Left cardiac atrium (tissue), 4 donors: ENCODE measurements at regions of chr11 and their contacts with region 1.

Region 1: GRCh38 chr11:73184953-73185671 is 33.0 kb upstream of the P2RY2 start:
- DNase-seq: peak; percentile 78
- ATAC-seq: peak; percentile 47 to 63

Region 2: GRCh38 chr11:73114110-73114824 is 70.8 kb before region 1 on chr11:
- intact Hi-C with region 1: no loop called
- DNase-seq: no peak
- ATAC-seq: no peak

Region 3: DNA sequence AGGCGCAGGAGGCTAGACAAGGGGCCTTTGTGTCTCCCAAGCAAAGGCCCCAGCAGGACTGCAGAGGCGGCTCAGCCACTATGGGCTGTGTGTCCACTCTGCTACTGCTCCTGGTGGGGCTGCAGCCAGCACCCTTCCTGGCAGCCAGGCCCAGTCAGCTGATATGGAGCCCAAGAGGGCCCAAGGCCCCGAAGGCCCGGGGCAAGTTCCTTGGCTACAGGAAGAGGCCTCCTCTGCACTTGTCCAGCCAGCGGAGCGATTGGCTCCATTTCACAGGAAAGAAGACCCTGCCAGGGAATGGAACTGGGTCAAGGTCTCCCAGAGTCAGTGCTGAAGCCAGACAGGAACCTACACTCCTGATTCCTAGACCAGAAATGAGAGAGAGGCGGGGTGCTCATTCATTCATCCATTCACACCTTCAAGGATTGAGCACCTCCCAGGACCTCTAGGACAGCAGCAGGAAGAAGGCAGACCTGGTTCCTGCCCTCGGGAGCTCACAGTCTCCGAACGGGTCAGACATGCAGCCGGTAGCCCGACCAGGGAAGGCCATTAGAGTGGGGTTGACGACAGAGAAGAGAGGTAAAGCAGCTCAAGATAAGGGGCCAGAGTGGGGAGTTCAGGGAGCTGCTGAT is 32.1 kb after region 1 on chr11:
- intact Hi-C with region 1: loop called in 1 of 2 experiments (anchors 2 kb)
- DNase-seq: no peak
- ATAC-seq: peak in 1 of 2 donors; percentile 2

Region 4: GRCh38 chr11:73242251-73243079 is 57.4 kb after region 1 on chr11:
- intact Hi-C with region 1: loop called (anchors 2 to 10 kb)
- DNase-seq: peak; percentile 83
- ATAC-seq: peak; percentile 66 to 83

Region 5: GRCh38 chr11:73288873-73289707 is 104.0 kb after region 1 on chr11:
- intact Hi-C with region 1: loop called (anchors 5 kb)
- DNase-seq: peak; percentile 81
- ATAC-seq: peak; percentile 82 to 86